B cell (primary cell): ENCODE measurements at regions of chr21 and their contacts with region 1.

Region 1: GRCh38 chr21:42107881-42108553 is 36.9 kb downstream of the UMODL1 start:
- DNase-seq: peak; percentile 85
- ATAC-seq: peak; percentile 86
- H3K4me3 ChIP-seq: peak overlapping the region in 4 of 5 experiments; percentile 5 to 50 (median 28)
- H3K4me3 Mint-ChIP-seq: peak overlapping the region; percentile 81
- H3K27ac ChIP-seq: peak overlapping the region; percentile 41 to 50
- H3K27ac Mint-ChIP-seq: peak overlapping the region; percentile 87
- H3K4me1 ChIP-seq: peaks cover 17 to 22% of the 10 kb centered on the region in 2 donors
- H3K4me1 Mint-ChIP-seq: peaks cover 38% of the 10 kb centered on the region
- H3K27me3 ChIP-seq: peaks cover 0 to 7% (median 0%) of the 10 kb centered on the region in 4 experiments
- H3K27me3 Mint-ChIP-seq: peaks cover 6% of the 10 kb centered on the region
- CTCF ChIP-seq: peak; percentile 70

Region 2: DNA sequence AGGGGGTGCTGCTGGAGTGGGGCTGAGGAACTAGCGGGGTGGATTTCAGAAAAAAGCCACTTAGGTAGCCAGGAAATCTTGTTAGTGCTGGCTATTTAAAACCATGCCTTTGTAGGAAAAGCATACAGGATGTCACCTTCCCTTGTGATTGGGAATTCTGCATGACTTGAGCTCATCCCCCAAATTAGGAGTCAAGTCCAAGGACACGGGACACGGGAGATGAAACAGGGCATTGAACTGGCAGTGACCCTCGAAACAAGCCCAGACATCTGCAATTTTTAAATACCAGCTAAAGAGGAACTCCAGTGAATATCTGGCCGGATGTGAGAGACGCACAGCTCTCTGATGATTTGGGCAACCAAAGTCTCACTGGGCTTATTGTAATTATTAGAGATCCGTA is 187.0 kb before region 1 on chr21:
- CTCF ChIA-PET with region 1: interaction called, 11 read pairs
- POLR2A ChIA-PET with region 1: interaction called, 11 read pairs
- intact Hi-C with region 1: loop called (anchors 1 kb)
- DNase-seq: peak; percentile 54
- ATAC-seq: peak; percentile 68
- H3K4me3 ChIP-seq: no peak overlapping the region
- H3K4me3 Mint-ChIP-seq: peak overlapping the region; percentile 26
- H3K27ac ChIP-seq: peak overlapping the region in 1 of 2 donors; percentile 8
- H3K27ac Mint-ChIP-seq: peak overlapping the region; percentile 50
- H3K4me1 ChIP-seq: peaks cover 46 to 48% of the 10 kb centered on the region in 2 donors
- H3K4me1 Mint-ChIP-seq: peaks cover 44% of the 10 kb centered on the region
- H3K27me3 ChIP-seq: no peaks in the 10 kb centered on the region
- H3K27me3 Mint-ChIP-seq: no peaks in the 10 kb centered on the region
- CTCF ChIP-seq: no peak

Region 3: DNA sequence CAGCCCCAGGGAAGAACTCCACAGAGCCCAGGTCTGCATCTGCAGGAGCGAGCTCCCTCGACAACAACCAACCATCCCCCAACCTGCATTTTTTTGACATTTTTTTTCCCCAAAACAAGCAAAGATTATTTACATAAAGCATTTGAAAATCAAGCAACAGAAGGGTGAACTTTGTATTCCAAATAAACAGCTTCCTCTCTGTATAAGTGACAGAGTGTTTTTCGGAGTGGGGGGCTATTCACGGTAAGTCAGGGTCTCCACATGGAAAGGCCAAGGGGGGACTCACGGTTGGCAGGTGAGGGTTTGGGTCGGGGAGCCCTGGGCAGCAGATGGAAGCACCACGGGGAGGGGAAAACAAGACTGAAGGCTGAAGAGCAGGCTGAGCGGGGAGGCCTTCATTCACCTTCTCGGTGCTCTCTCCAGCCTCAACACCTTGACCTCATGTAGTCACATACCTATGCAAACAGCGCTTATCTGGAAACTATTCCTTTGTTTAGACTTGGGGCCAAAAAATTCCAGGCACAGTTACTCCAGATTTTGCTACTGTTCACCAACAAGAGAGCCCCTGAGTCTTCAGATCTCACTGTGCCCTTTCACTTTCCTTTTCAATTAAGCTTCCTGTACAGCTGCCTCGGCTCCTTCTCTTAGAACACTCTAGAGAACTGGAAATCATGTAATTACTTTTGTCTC is 181.8 kb before region 1 on chr21:
- CTCF ChIA-PET with region 1: interaction called, 11 read pairs
- POLR2A ChIA-PET with region 1: interaction called, 11 read pairs
- intact Hi-C with region 1: loop called (anchors 1 kb)
- DNase-seq: peak; percentile 76
- ATAC-seq: peak; percentile 70
- H3K4me3 ChIP-seq: peak overlapping the region; percentile 55 to 70 (median 62)
- H3K4me3 Mint-ChIP-seq: peak overlapping the region; percentile 94
- H3K27ac ChIP-seq: peak overlapping the region; percentile 82 to 87
- H3K27ac Mint-ChIP-seq: peak overlapping the region; percentile 98
- H3K4me1 ChIP-seq: peaks cover 71 to 85% of the 10 kb centered on the region in 2 donors
- H3K4me1 Mint-ChIP-seq: peaks cover 81% of the 10 kb centered on the region
- H3K27me3 ChIP-seq: no peaks in the 10 kb centered on the region
- H3K27me3 Mint-ChIP-seq: no peaks in the 10 kb centered on the region
- CTCF ChIP-seq: no peak

Region 4: DNA sequence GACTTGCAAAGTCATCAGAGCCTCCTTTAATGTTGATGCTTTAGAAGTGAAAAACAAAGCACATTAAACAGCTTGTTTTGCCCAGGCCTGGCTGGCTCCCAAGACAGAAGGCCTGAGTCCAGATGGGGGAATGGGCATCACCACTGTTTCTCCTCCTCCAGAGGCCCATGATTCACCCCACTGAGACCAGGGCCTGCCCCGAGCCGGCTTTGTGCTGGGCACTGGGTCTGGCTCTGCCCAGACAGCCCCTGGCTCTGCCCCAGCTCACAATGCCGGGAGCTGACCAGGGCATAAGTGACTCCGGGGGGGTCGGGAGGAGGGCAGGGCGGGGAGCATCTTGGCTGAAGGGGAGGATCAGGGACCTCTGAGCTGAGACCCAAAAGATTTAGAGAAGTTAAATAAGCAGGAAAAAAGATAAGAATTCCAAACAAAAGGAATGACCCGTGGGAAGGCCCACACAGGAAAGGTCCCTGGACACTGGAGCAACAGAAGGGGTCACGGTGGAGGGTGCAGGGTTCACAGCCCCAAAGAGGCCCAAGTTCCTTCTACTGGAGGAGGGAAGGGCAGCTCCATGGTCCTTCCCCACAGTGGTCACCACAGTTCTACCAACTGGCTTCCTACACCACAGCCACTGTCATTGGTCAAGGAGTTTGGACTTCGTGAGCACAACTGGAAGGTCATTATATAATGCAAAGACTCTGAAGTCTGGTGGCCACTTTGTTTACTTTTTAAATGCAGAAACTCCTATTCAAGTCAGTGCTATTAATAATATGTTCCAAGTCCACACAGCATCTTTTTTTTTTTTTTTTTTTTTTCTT is 159.7 kb before region 1 on chr21:
- CTCF ChIA-PET with region 1: no interaction called
- POLR2A ChIA-PET with region 1: no interaction called
- intact Hi-C with region 1: no loop called
- DNase-seq: no peak
- ATAC-seq: no peak
- H3K4me3 ChIP-seq: no peak overlapping the region
- H3K4me3 Mint-ChIP-seq: no peak overlapping the region
- H3K27ac ChIP-seq: no peak overlapping the region
- H3K27ac Mint-ChIP-seq: no peak overlapping the region
- H3K4me1 ChIP-seq: peaks cover 3 to 4% of the 10 kb centered on the region in 2 donors
- H3K4me1 Mint-ChIP-seq: no peaks in the 10 kb centered on the region
- H3K27me3 ChIP-seq: peaks cover 0 to 11% (median 2%) of the 10 kb centered on the region in 4 experiments
- H3K27me3 Mint-ChIP-seq: peaks cover 10% of the 10 kb centered on the region
- CTCF ChIP-seq: no peak

Region 5: DNA sequence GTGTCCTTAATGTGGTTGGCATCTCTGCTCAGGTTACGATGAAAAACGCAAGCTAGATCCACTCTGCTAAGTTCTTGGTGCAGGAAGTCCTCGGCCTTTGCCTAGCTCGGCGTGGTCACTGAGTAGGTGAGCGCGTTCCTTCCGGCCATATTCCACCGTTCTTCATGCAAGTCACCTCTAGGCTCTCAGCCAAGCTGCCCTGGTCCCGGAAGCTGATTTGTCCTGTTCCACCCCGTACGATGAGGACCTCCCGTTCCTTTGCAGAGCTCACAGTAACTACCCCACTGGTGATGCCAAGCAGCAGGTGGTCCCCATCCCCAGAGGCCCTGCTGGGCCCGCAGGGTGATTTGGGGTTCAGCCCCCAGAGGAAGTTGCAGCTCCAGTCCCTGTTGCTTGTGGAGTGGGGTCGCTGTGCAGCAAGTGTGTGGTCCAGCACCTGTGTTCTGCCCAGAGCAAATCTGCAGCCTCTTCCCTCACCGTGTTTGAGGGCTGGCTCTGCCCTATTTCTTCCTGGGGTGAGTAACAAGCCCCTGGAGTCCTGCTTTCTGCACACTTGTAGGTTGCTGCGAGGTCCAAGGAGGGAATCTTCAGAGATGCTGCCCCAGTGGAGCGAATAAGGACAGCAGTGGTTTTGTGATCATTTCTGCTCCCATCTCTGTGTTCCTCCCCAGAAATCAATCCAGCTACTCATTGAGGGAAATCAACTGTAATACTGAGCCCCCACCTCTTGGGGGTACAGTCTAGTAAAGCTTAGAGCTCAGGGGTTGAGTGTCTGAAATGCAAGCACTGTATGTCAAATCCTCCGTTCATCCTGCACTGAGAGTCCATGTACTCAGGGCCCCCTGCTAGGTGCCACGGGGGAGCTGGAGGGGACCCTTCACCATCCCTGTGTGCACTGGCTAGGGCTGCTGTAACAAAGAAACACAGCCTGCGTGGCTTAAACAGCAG is 34.6 kb before region 1 on chr21:
- CTCF ChIA-PET with region 1: interaction called, 10 read pairs
- POLR2A ChIA-PET with region 1: no interaction called
- intact Hi-C with region 1: no loop called
- DNase-seq: peak; percentile 17
- ATAC-seq: peak; percentile 31
- H3K4me3 ChIP-seq: peak overlapping the region in 1 of 5 experiments; percentile 10
- H3K4me3 Mint-ChIP-seq: peak overlapping the region; percentile 32
- H3K27ac ChIP-seq: no peak overlapping the region
- H3K27ac Mint-ChIP-seq: no peak overlapping the region
- H3K4me1 ChIP-seq: peaks cover 12 to 21% of the 10 kb centered on the region in 2 donors
- H3K4me1 Mint-ChIP-seq: peaks cover 29% of the 10 kb centered on the region
- H3K27me3 ChIP-seq: peaks cover 0 to 5% (median 0%) of the 10 kb centered on the region in 4 experiments
- H3K27me3 Mint-ChIP-seq: no peaks in the 10 kb centered on the region
- CTCF ChIP-seq: no peak

Region 6: DNA sequence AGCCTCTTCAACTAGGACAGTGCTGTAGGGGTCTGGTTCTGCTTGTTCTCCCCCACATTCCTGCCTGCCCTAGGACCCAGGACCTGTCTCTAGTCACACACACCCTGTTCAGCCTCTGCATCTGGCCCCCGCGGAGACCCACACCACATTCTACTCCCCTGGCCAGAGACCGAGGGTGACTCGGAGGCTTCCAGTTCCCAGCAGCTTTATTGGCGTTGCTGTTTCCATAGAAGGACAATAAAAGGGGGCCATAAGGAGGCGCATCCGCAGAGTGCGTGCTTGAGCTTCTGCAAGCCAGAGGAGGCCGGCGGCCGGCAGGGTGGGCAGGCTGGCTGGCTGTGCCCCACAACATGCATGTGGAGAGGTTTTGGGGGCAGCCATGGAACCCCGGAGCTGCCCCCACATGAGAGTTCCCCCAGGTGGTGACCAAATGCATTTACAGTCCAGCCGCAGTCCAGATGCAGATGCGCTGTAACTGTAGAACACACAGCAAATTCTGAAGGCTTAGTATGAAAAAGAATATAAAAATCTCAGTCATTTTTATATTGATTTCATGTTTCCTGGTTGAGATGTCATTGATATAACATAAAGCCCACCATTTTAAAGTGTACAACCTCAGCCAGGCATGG is 597.8 kb after region 1 on chr21:
- CTCF ChIA-PET with region 1: no interaction called
- POLR2A ChIA-PET with region 1: no interaction called
- intact Hi-C with region 1: no loop called
- DNase-seq: no peak
- ATAC-seq: no peak
- H3K4me3 ChIP-seq: no peak overlapping the region
- H3K4me3 Mint-ChIP-seq: no peak overlapping the region
- H3K27ac ChIP-seq: no peak overlapping the region
- H3K27ac Mint-ChIP-seq: no peak overlapping the region
- H3K4me1 ChIP-seq: no peaks in the 10 kb centered on the region
- H3K4me1 Mint-ChIP-seq: no peaks in the 10 kb centered on the region
- H3K27me3 ChIP-seq: no peaks in the 10 kb centered on the region
- H3K27me3 Mint-ChIP-seq: peaks cover 3% of the 10 kb centered on the region
- CTCF ChIP-seq: no peak